ENCODE measurements at regions of chr14 and their contacts with region 1.

Region 1: DNA sequence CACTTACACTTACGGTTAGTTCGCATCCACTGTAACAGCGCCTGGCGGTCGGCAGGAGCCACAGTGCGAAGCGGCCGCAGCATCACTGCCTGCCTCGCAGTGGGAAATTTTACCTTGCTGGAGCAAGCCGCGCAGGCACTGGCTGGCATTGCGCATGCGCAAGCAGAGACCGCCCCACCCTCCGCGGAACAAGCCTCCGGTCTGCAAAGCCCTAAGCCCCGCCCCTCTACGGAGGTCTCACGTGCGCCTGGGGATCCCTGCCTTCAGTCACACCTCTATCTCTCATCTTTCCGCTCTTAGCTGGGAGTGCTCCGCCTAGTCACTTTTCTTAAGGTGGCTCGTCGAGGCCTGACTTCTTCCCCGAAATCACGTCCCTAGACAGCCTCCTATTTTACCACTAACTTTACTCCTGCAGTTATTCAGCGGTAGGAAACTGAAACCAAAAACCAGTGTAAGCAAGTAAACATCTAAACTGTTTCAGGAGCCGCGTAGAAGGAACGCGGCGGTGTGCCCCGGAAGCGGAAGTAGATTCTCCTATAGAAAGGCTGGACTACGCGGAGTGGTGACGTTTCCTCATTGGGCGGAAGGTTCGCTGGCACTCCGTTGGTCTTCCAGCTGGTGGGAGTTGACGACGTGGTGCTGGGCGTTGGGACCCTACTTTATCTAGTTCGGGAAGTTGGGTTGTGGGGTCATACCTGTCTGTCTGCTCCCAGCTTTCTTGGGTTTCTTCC is at the start of gene SRP54:
- DNase-seq: peak; percentile 98 to 100 (median 100)
- ATAC-seq: peak; percentile 93
- H3K4me3 ChIP-seq: peak within 1 kb of the TSS; percentile 81
- H3K4me3 Mint-ChIP-seq: no peak within 1 kb of the TSS
- H3K27ac ChIP-seq: peak within 1 kb of the TSS; percentile 96 to 99
- H3K27ac Mint-ChIP-seq: no peak within 1 kb of the TSS
- H3K4me1 ChIP-seq: peaks cover 38% of the 10 kb centered on the region
- H3K4me1 Mint-ChIP-seq: peaks cover 14% of the 10 kb centered on the region
- H3K27me3 ChIP-seq: no peaks in the 10 kb centered on the region
- H3K27me3 Mint-ChIP-seq: no peaks in the 10 kb centered on the region
- CTCF ChIP-seq: no peak
- total RNA-seq, gene SRP54: 30.3 to 32.7 TPM

Region 2: GRCh38 chr14:34857689-34858449 is 124.7 kb before region 1 on chr14:
- CTCF ChIA-PET with region 1: interaction called, 7 read pairs
- POLR2A ChIA-PET with region 1: interaction called, 19 read pairs
- intact Hi-C with region 1: loop called in 1 of 2 experiments (anchors 5 kb)
- DNase-seq: peak in 6 of 14 experiments; percentile 4 to 75 (median 35)
- ATAC-seq: peak; percentile 83
- H3K4me3 ChIP-seq: no peak overlapping the region
- H3K4me3 Mint-ChIP-seq: peak overlapping the region; percentile 9
- H3K27ac ChIP-seq: peak overlapping the region; percentile 24 to 43
- H3K27ac Mint-ChIP-seq: peak overlapping the region; percentile 55
- H3K4me1 ChIP-seq: peaks cover 18% of the 10 kb centered on the region
- H3K4me1 Mint-ChIP-seq: peaks cover 47% of the 10 kb centered on the region
- H3K27me3 ChIP-seq: no peaks in the 10 kb centered on the region
- H3K27me3 Mint-ChIP-seq: no peaks in the 10 kb centered on the region
- CTCF ChIP-seq: no peak

Region 3: DNA sequence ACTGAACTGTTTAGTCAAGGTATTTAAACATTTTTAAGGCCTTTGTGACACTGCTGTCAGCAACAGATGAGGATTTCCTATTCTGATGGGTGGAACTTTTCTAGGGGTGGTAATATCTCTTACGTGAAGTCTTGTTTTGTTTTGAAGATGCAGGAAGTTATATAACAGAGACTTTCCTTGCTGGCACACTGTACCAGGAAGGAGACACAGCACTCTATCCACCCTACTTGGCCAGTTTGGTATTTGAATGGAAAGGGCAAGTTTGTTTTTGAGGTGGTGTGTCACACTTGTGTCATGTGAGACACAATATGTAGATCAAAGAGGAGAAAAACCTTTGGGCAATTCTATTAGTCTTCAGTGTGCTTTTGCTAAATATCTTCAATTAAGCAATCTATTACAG is 51.4 kb before region 1 on chr14:
- CTCF ChIA-PET with region 1: interaction called, 4 read pairs
- POLR2A ChIA-PET with region 1: interaction called, 80 read pairs
- intact Hi-C with region 1: loop called (anchors 1 to 2 kb)
- DNase-seq: peak in 12 of 14 experiments; percentile 2 to 91 (median 44)
- ATAC-seq: peak; percentile 91
- H3K4me3 ChIP-seq: peak overlapping the region; percentile 17
- H3K4me3 Mint-ChIP-seq: peak overlapping the region; percentile 26
- H3K27ac ChIP-seq: peak overlapping the region; percentile 80 to 93
- H3K27ac Mint-ChIP-seq: peak overlapping the region; percentile 90
- H3K4me1 ChIP-seq: peaks cover 24% of the 10 kb centered on the region
- H3K4me1 Mint-ChIP-seq: peaks cover 37% of the 10 kb centered on the region
- H3K27me3 ChIP-seq: no peaks in the 10 kb centered on the region
- H3K27me3 Mint-ChIP-seq: no peaks in the 10 kb centered on the region
- CTCF ChIP-seq: no peak

Region 4: GRCh38 chr14:34994668-34995067 is 12.1 kb after region 1 on chr14:
- CTCF ChIA-PET with region 1: interaction called, 9 read pairs
- POLR2A ChIA-PET with region 1: interaction called, 10 read pairs
- intact Hi-C with region 1: no loop called
- DNase-seq: no peak
- ATAC-seq: no peak
- H3K4me3 ChIP-seq: no peak overlapping the region
- H3K4me3 Mint-ChIP-seq: no peak overlapping the region
- H3K27ac ChIP-seq: no peak overlapping the region
- H3K27ac Mint-ChIP-seq: peak overlapping the region; percentile 32
- H3K4me1 ChIP-seq: no peaks in the 10 kb centered on the region
- H3K4me1 Mint-ChIP-seq: peaks cover 38% of the 10 kb centered on the region
- H3K27me3 ChIP-seq: no peaks in the 10 kb centered on the region
- H3K27me3 Mint-ChIP-seq: no peaks in the 10 kb centered on the region
- CTCF ChIP-seq: no peak

Region 5: DNA sequence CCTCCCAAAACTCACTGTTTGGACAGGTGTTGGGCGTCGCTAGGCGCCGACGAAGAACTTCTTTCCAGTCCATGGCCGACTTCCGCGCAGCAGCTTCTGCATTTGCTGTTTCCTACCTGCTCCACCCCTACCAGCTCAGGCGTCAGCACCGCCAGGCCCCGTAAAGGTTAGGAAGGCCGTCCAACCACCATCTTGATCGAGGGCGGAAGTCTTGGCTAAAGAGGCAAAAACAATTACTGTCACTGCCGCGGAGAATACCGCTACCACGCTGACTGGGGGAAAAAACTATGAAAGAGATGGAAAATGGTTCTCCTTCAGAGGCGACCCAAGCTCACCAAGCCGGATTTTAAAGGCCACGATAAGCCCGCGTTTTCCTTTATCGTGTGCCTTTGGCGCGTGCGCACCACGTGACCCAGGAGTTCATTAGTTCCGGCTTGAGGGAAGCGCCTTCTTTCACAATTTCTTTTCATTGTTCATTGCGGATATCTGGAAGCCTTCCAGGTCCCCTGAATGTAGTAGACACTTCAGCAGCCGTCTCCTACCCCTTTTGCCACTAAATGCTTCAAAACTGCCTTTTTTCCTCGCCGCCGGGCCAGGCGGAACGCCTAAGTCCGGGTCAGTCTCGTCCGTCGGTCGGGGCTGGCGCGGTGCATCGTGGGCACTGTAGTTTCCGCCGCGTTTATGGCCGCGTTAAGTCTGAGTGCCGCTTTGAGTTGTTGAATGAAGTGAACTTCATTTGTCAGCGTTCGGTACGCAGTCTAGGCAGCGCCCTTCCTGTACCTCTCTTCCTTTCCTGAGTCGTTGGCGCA is 139.5 kb after region 1 on chr14 and contains the starts of genes PPP2R3C and PRORP:
- CTCF ChIA-PET with region 1: no interaction called
- POLR2A ChIA-PET with region 1: interaction called, 45 read pairs
- intact Hi-C with region 1: loop called (anchors 1 to 2 kb)
- DNase-seq: peak; percentile 82 to 98 (median 87)
- ATAC-seq: peak; percentile 81
- H3K4me3 ChIP-seq: peak within 1 kb of the TSS; percentile 75
- H3K4me3 Mint-ChIP-seq: peak within 1 kb of the TSS; percentile 100
- H3K27ac ChIP-seq: peak within 1 kb of the TSS; percentile 99
- H3K27ac Mint-ChIP-seq: peak within 1 kb of the TSS; percentile 99
- H3K4me1 ChIP-seq: peaks cover 56% of the 10 kb centered on the region
- H3K4me1 Mint-ChIP-seq: peaks cover 79% of the 10 kb centered on the region
- H3K27me3 ChIP-seq: no peaks in the 10 kb centered on the region
- H3K27me3 Mint-ChIP-seq: no peaks in the 10 kb centered on the region
- CTCF ChIP-seq: no peak
- total RNA-seq, gene PPP2R3C: 34.9 to 37.6 TPM
- total RNA-seq, gene PRORP: 27.0 to 32.0 TPM

Region 6: DNA sequence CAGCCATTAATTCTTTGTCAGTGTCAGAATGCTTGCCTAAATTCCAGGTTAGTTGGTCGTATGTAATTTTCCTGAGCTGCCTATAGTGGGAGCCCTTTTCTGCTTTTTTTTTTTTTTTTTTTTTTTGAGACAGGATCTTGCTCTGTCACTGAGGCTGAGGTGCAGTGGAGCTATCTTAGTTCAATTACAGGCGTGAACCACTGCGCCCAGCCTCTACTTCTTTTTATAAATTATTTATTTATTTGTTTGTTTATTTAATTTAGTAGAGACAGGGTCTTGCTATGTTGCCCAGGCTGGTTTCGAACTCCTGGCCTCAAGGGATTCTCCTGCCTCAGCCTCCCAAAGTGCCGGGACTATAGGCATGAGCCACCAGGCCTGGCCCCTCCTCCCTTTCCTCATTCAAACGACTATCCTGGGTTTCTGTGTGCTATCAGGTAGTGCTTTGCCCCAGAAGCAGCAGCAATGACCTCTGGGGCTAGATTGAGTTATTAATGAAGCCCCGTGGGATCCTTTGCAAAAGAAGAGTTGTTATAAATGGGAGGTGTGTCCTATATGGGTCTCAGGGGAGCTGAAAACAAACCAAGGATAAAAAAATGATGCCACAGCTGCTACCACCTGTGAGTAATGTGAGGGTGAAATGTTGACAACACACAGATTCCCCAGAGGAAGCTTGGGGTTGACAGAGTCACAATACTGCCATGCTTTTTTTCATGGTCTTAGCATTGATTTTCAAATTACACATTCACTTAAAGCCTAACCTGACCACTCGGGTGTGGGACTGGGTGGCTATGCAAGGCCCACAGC is 456.5 kb after region 1 on chr14:
- CTCF ChIA-PET with region 1: no interaction called
- POLR2A ChIA-PET with region 1: no interaction called
- intact Hi-C with region 1: no loop called
- DNase-seq: peak in 1 of 14 experiments; percentile 21
- ATAC-seq: no peak
- H3K4me3 ChIP-seq: no peak overlapping the region
- H3K4me3 Mint-ChIP-seq: no peak overlapping the region
- H3K27ac ChIP-seq: no peak overlapping the region
- H3K27ac Mint-ChIP-seq: no peak overlapping the region
- H3K4me1 ChIP-seq: no peaks in the 10 kb centered on the region
- H3K4me1 Mint-ChIP-seq: no peaks in the 10 kb centered on the region
- H3K27me3 ChIP-seq: peaks cover 0 to 4% of the 10 kb centered on the region in 2 experiments
- H3K27me3 Mint-ChIP-seq: no peaks in the 10 kb centered on the region
- CTCF ChIP-seq: peak; percentile 54

Region 7: DNA sequence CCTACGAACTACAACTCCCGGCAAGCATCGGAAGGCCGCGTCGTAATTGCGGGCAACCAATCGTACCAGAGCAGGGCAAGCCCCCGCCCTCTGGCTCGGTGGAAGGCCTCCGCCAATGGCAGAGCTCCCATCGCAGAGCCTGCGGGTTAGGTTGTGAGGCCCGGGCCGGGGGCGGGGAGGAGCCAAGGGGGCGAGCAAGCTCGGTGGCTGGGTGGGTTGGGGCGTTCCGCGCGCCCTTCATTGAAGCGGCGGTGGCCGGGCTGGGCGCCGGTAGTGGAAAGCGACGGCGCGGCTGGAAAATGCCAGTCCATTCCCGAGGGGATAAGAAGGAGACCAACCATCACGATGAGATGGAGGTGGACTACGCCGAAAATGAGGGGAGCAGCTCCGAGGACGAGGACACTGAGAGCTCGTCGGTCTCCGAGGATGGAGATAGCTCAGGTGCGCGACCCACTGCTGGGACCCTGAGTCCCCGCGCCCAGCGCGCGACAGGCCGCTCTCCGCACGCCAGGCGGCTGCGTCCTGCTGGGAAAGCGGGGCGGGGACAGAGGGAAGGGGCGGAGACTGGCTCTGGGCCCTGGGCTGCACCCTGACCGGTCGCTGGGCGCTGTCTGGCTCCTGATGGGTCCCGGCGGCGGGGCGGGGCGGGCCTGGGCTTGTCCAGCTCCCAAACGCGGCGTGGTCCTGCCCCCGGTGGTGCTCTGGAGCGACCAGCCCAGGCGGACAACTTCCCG is 843.8 kb after region 1 on chr14 and contains the start of gene BRMS1L:
- CTCF ChIA-PET with region 1: no interaction called
- POLR2A ChIA-PET with region 1: no interaction called
- intact Hi-C with region 1: loop called in 1 of 2 experiments (anchors 5 kb)
- DNase-seq: peak; percentile 90 to 98 (median 95)
- ATAC-seq: peak; percentile 98
- H3K4me3 ChIP-seq: peak within 1 kb of the TSS; percentile 99
- H3K4me3 Mint-ChIP-seq: peak within 1 kb of the TSS; percentile 88
- H3K27ac ChIP-seq: peak within 1 kb of the TSS; percentile 72 to 89
- H3K27ac Mint-ChIP-seq: peak within 1 kb of the TSS; percentile 68
- H3K4me1 ChIP-seq: peaks cover 15% of the 10 kb centered on the region
- H3K4me1 Mint-ChIP-seq: peaks cover 31% of the 10 kb centered on the region
- H3K27me3 ChIP-seq: no peaks in the 10 kb centered on the region
- H3K27me3 Mint-ChIP-seq: no peaks in the 10 kb centered on the region
- CTCF ChIP-seq: no peak
- total RNA-seq, gene BRMS1L: 6.1 to 9.2 TPM

Region 8: DNA sequence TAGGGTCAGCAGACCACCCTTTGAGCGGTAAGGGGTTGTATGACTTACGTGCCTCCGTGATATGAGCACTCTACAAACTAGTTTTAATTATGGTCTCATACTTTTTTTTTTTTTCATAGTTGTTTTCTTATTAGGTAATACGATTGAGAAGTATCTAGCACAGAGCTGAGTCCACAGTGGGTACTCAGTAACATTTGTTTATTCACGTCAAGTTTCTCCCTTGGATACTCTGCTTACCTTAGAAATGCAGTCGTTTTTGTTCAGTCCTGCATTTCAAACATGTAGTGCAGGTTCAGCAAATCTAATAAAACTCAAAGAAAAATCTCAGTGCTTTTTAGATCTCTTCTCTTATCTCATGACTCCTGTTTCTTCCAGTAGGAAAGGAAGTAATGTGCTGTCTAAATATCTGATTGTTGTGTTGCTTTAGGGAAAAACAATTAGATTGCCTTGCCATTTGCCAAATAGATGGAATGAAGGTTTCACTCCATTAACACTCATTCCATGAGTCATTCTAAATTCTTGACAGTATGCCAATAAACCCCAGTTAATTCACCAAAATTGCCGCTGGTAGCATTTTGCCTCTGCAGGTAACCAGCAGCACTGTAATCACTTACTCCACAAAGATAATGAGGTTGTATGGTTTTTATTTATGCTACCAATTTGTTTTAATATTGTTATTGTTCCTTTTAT is 1075.0 kb after region 1 on chr14:
- CTCF ChIA-PET with region 1: no interaction called
- POLR2A ChIA-PET with region 1: no interaction called
- intact Hi-C with region 1: no loop called
- DNase-seq: no peak
- ATAC-seq: no peak
- H3K4me3 ChIP-seq: no peak overlapping the region
- H3K4me3 Mint-ChIP-seq: no peak overlapping the region
- H3K27ac ChIP-seq: no peak overlapping the region
- H3K27ac Mint-ChIP-seq: no peak overlapping the region
- H3K4me1 ChIP-seq: no peaks in the 10 kb centered on the region
- H3K4me1 Mint-ChIP-seq: no peaks in the 10 kb centered on the region
- H3K27me3 ChIP-seq: peaks cover 0 to 5% of the 10 kb centered on the region in 2 experiments
- H3K27me3 Mint-ChIP-seq: peaks cover 22% of the 10 kb centered on the region
- CTCF ChIP-seq: no peak

Measured in CD4-positive, alpha-beta T cell (primary cell).